Left lung (tissue), 14 donors: ENCODE measurements at regions of chr10 and their contacts with region 1.

Region 1: DNA sequence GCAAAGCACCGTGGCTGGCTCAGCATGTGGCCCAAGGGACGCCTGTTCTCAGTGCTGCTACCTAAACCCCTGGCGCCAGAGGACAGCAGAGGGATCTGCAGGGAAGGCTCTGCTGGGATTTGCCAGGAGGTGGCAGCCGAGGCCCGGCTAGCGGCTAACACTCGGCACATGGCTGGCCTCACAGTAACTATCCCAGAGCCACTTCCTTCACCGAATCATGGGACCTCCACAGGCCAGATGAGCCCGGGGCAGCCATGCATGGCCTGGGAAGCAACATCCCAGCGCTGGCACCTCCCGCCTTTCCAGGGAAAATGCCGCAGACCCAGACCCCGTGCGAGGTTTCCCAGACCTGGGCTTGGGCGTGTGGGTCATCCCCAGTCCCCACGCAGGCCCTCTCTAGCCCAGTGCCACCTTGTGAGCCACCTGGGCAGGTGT is 36.4 kb downstream of the DPYSL4 start:
- DNase-seq: peak; percentile 63 to 92 (median 82)
- ATAC-seq: peak; percentile 98
- H3K4me3 ChIP-seq: no peak overlapping the region
- H3K27ac ChIP-seq: no peak overlapping the region
- H3K4me1 ChIP-seq: peaks cover 0 to 16% of the 10 kb centered on the region in 2 donors
- H3K27me3 ChIP-seq: no peaks in the 10 kb centered on the region
- CTCF ChIP-seq: peak; percentile 88 to 91

Region 2: GRCh38 chr10:132347211-132347930 is 124.2 kb after region 1 on chr10:
- intact Hi-C with region 1: loop called (anchors 5 to 10 kb)
- DNase-seq: peak in 1 of 4 donors; percentile 24
- ATAC-seq: no peak
- H3K4me3 ChIP-seq: no peak overlapping the region
- H3K27ac ChIP-seq: no peak overlapping the region
- H3K4me1 ChIP-seq: no peaks in the 10 kb centered on the region
- H3K27me3 ChIP-seq: no peaks in the 10 kb centered on the region
- CTCF ChIP-seq: no peak

Region 3: DNA sequence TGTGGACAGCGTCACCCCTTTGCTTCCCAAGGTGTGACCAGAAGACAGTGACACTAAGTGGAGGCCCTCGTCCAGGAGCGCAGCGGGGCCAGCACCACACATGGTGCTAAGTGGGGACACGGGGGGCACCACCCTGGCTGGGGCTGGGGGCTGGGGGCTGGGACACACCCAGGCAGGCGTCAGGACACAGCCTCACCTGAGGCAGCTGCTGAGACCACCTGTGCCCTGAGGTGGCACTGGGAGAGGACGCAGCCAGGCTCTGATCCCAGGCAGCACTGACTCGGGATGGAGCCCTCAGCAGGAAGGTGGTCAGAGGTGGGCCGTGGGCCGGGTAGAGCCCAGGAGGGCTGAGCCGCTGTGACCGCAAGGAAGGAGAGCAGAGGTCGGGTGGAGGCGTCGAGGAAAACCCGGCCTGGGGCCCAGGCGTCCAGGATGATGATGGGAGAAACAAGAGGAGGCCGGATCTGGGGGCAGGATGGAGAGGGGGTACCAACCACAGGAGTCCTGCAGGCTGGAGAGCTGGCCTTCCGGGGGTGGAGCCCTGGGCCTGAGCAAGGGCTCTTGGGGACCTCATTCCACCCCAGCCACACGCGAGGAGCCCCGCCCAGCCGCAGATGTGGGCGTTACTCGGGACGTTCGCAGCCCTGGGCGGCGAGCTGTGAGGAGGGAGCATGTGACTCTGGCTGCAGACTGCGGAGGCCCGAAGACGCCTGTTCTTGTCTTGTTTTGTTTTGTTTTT is 131.4 kb after region 1 on chr10:
- intact Hi-C with region 1: loop called (anchors 5 to 10 kb)
- DNase-seq: peak in 1 of 4 donors; percentile 82
- ATAC-seq: no peak
- H3K4me3 ChIP-seq: no peak overlapping the region
- H3K27ac ChIP-seq: no peak overlapping the region
- H3K4me1 ChIP-seq: peaks cover 0 to 4% of the 10 kb centered on the region in 2 donors
- H3K27me3 ChIP-seq: no peaks in the 10 kb centered on the region
- CTCF ChIP-seq: no peak

Region 4: GRCh38 chr10:132396495-132397035 is 173.4 kb after region 1 on chr10:
- intact Hi-C with region 1: no loop called
- DNase-seq: peak in 2 of 4 donors; percentile 80 to 93
- ATAC-seq: peak; percentile 53
- H3K4me3 ChIP-seq: peak overlapping the region; percentile 41 to 72
- H3K27ac ChIP-seq: peak overlapping the region; percentile 88 to 92
- H3K4me1 ChIP-seq: peaks cover 27 to 56% of the 10 kb centered on the region in 2 donors
- H3K27me3 ChIP-seq: no peaks in the 10 kb centered on the region
- CTCF ChIP-seq: no peak